ENCODE measurements at regions of chr18 and their contacts with region 1.

Region 1: GRCh38 chr18:76982841-76983587 is 149.6 kb downstream of the MBP start:
- DNase-seq: peak; percentile 48
- ATAC-seq: peak; percentile 83
- H3K4me3 ChIP-seq: no peak overlapping the region
- H3K27ac ChIP-seq: no peak overlapping the region
- H3K4me1 ChIP-seq: peaks cover 21% of the 10 kb centered on the region
- H3K27me3 ChIP-seq: no peaks in the 10 kb centered on the region
- CTCF ChIP-seq: peak; percentile 91 to 93 (median 92)
- EP300 ChIP-seq: no peak
- POLR2A ChIP-seq: no peak
- RAD21 ChIP-seq: peak; percentile 83

Region 2: GRCh38 chr18:76875390-76876325 is 107.4 kb before region 1 on chr18:
- CTCF ChIA-PET with region 1: interaction called, 37 read pairs
- POLR2A ChIA-PET with region 1: interaction called, 3 read pairs
- RAD21 ChIA-PET with region 1: interaction called, 6 read pairs
- SMC1A ChIA-PET with region 1: interaction called, 4 read pairs
- in situ Hi-C with region 1: no loop called
- intact Hi-C with region 1: loop called (anchors 2 kb)
- DNase-seq: no peak
- ATAC-seq: peak; percentile 88
- H3K4me3 ChIP-seq: no peak overlapping the region
- H3K27ac ChIP-seq: no peak overlapping the region
- H3K4me1 ChIP-seq: no peaks in the 10 kb centered on the region
- H3K27me3 ChIP-seq: no peaks in the 10 kb centered on the region
- CTCF ChIP-seq: peak; percentile 54 to 69 (median 63); a peak in 5 of 6 replicates
- EP300 ChIP-seq: no peak
- POLR2A ChIP-seq: no peak
- RAD21 ChIP-seq: peak; percentile 68

Region 3: GRCh38 chr18:76932026-76932819 is 50.8 kb before region 1 on chr18:
- CTCF ChIA-PET with region 1: interaction called, 236 read pairs
- POLR2A ChIA-PET with region 1: no interaction called
- RAD21 ChIA-PET with region 1: no interaction called
- SMC1A ChIA-PET with region 1: interaction called, 14 read pairs
- in situ Hi-C with region 1: no loop called
- intact Hi-C with region 1: no loop called
- DNase-seq: no peak
- ATAC-seq: no peak
- H3K4me3 ChIP-seq: no peak overlapping the region
- H3K27ac ChIP-seq: no peak overlapping the region
- H3K4me1 ChIP-seq: peaks cover 25% of the 10 kb centered on the region
- H3K27me3 ChIP-seq: no peaks in the 10 kb centered on the region
- CTCF ChIP-seq: no peak
- EP300 ChIP-seq: no peak
- POLR2A ChIP-seq: no peak
- RAD21 ChIP-seq: no peak

Region 4: GRCh38 chr18:76958692-76959341 is 24.2 kb before region 1 on chr18:
- CTCF ChIA-PET with region 1: interaction called, 208 read pairs
- POLR2A ChIA-PET with region 1: interaction called, 3 read pairs
- RAD21 ChIA-PET with region 1: interaction called, 70 read pairs
- SMC1A ChIA-PET with region 1: interaction called, 140 read pairs
- in situ Hi-C with region 1: no loop called
- intact Hi-C with region 1: loop called (anchors 2 kb)
- DNase-seq: no peak
- ATAC-seq: no peak
- H3K4me3 ChIP-seq: no peak overlapping the region
- H3K27ac ChIP-seq: no peak overlapping the region
- H3K4me1 ChIP-seq: peaks cover 8% of the 10 kb centered on the region
- H3K27me3 ChIP-seq: no peaks in the 10 kb centered on the region
- CTCF ChIP-seq: no peak
- EP300 ChIP-seq: no peak
- POLR2A ChIP-seq: no peak
- RAD21 ChIP-seq: no peak

Region 5: GRCh38 chr18:77000527-77000926 is 17.5 kb after region 1 on chr18:
- CTCF ChIA-PET with region 1: interaction called, 39 read pairs
- POLR2A ChIA-PET with region 1: no interaction called
- RAD21 ChIA-PET with region 1: interaction called, 3 read pairs
- SMC1A ChIA-PET with region 1: interaction called, 13 read pairs
- in situ Hi-C with region 1: no loop called
- intact Hi-C with region 1: no loop called
- DNase-seq: no peak
- ATAC-seq: peak; percentile 69
- H3K4me3 ChIP-seq: no peak overlapping the region
- H3K27ac ChIP-seq: no peak overlapping the region
- H3K4me1 ChIP-seq: no peaks in the 10 kb centered on the region
- H3K27me3 ChIP-seq: no peaks in the 10 kb centered on the region
- CTCF ChIP-seq: peak; percentile 91 to 98 (median 97)
- EP300 ChIP-seq: no peak
- POLR2A ChIP-seq: no peak
- RAD21 ChIP-seq: peak; percentile 92

Region 6: GRCh38 chr18:77207540-77207939 is 224.5 kb after region 1 on chr18:
- CTCF ChIA-PET with region 1: interaction called, 48 read pairs
- POLR2A ChIA-PET with region 1: no interaction called
- RAD21 ChIA-PET with region 1: interaction called, 12 read pairs
- SMC1A ChIA-PET with region 1: interaction called, 15 read pairs
- in situ Hi-C with region 1: no loop called
- intact Hi-C with region 1: no loop called
- DNase-seq: no peak
- ATAC-seq: peak; percentile 54
- H3K4me3 ChIP-seq: no peak overlapping the region
- H3K27ac ChIP-seq: no peak overlapping the region
- H3K4me1 ChIP-seq: peaks cover 4% of the 10 kb centered on the region
- H3K27me3 ChIP-seq: no peaks in the 10 kb centered on the region
- CTCF ChIP-seq: peak in 2 of 3 experiments; percentile 47 to 61; a peak in 4 of 6 replicates
- EP300 ChIP-seq: no peak
- POLR2A ChIP-seq: no peak
- RAD21 ChIP-seq: 0 out of 2 replicates have a peak, but pooled peaks have one; percentile 2